Activated T-helper 1 cell treated with anti-CD3 and anti-CD28 coated beads, Interleukin-12 subunit alpha, Interleukin-12 subunit beta, Interleukin-2, Interleukin-4 antibody, amounts not matched to agents 30 ng/mL and 10 ng/mL and 1 ng/mL, durations not matched to agents 14 hours and 24 hours and 36 hours (primary cell): ENCODE measurements at regions of chr2 and their contacts with region 1.

Region 1: DNA sequence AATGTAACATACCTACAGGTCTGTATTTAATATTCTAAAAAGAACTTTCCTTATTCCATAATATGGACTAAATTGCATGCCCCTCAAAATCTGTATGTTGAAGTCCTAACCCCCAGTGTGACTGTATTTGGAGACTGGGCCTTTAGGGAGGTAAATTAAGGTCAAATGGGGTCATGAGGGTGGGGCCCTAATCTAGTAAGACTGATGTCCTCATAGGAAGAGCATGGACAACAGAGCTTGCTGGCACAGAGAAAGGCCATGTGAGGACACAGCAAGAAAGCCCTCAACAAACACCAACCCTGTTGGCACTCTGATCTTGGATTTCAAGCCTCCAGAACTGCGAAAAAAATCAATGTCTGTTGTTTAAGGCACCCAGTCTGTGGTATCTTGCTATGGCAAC is 18.6 kb downstream of the SF3B1 start:
- DNase-seq: no peak
- H3K4me3 Mint-ChIP-seq: no peak overlapping the region
- H3K27ac Mint-ChIP-seq: no peak overlapping the region
- H3K4me1 Mint-ChIP-seq: no peaks in the 10 kb centered on the region
- H3K27me3 Mint-ChIP-seq: no peaks in the 10 kb centered on the region

Region 2: GRCh38 chr2:196660244-196660643 is 756.0 kb before region 1 on chr2:
- intact Hi-C with region 1: no loop called
- DNase-seq: no peak
- H3K4me3 Mint-ChIP-seq: no peak overlapping the region
- H3K27ac Mint-ChIP-seq: no peak overlapping the region
- H3K4me1 Mint-ChIP-seq: no peaks in the 10 kb centered on the region
- H3K27me3 Mint-ChIP-seq: no peaks in the 10 kb centered on the region

Region 3: GRCh38 chr2:197405582-197405981 is 10.7 kb before region 1 on chr2:
- intact Hi-C with region 1: loop called (anchors 2 kb)
- DNase-seq: no peak
- H3K4me3 Mint-ChIP-seq: no peak overlapping the region
- H3K27ac Mint-ChIP-seq: no peak overlapping the region
- H3K4me1 Mint-ChIP-seq: no peaks in the 10 kb centered on the region
- H3K27me3 Mint-ChIP-seq: no peaks in the 10 kb centered on the region